H1 (cell line): ENCODE measurements at regions of chr7 and their contacts with region 1.

Region 1: DNA sequence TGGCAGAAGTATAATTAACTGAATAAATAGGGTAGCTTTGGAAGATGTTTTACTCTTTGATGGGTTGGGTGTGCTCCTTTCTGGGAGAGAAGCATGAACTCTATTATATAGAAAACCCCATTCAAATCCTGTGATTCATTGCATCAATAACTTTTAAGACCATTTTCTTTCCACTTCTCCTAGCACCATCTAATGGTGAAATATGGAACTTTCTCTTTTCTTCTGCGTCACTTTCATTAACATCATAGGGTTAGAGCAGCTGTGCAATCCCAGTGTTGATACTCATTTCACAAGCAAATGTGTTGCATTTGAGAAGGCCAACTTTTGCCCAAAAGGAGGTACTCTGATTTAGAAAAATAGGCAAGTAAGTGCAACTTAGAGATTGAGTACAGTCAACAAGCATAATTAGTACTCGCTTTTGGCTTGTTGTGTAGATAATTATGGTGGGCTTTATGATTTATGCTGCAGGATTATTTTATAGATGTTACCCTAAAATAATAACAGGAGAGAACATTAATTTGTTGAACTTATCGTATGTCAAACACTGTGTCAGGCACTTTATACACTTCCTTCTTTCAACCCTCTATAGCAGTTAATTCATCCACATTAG is 92.9 kb downstream of the CPED1 start:
- DNase-seq: no peak
- H3K4me3 ChIP-seq: no peak overlapping the region
- H3K27ac ChIP-seq: no peak overlapping the region
- H3K4me1 ChIP-seq: no peaks in the 10 kb centered on the region
- H3K27me3 ChIP-seq: no peaks in the 10 kb centered on the region; a peak in 1 of 7 replicates
- CTCF ChIP-seq: peak in 2 of 3 experiments; percentile 38 to 59; a peak in 2 of 4 replicates
- EP300 ChIP-seq: no peak
- POLR2A ChIP-seq: no peak
- RAD21 ChIP-seq: peak; percentile 68 to 69

Region 2: GRCh38 chr7:120792091-120792860 is 289.2 kb before region 1 on chr7:
- CTCF ChIA-PET with region 1: interaction called, 16 read pairs
- POLR2A ChIA-PET with region 1: no interaction called
- DNase-seq: peak; percentile 67 to 91
- H3K4me3 ChIP-seq: no peak overlapping the region
- H3K27ac ChIP-seq: no peak overlapping the region
- H3K4me1 ChIP-seq: peaks cover 0 to 4% (median 0%) of the 10 kb centered on the region in 4 experiments; a peak in 1 of 7 replicates
- H3K27me3 ChIP-seq: no peaks in the 10 kb centered on the region
- CTCF ChIP-seq: peak; percentile 92 to 97 (median 95)
- EP300 ChIP-seq: no peak
- POLR2A ChIP-seq: no peak
- RAD21 ChIP-seq: peak; percentile 71 to 84

Region 3: DNA sequence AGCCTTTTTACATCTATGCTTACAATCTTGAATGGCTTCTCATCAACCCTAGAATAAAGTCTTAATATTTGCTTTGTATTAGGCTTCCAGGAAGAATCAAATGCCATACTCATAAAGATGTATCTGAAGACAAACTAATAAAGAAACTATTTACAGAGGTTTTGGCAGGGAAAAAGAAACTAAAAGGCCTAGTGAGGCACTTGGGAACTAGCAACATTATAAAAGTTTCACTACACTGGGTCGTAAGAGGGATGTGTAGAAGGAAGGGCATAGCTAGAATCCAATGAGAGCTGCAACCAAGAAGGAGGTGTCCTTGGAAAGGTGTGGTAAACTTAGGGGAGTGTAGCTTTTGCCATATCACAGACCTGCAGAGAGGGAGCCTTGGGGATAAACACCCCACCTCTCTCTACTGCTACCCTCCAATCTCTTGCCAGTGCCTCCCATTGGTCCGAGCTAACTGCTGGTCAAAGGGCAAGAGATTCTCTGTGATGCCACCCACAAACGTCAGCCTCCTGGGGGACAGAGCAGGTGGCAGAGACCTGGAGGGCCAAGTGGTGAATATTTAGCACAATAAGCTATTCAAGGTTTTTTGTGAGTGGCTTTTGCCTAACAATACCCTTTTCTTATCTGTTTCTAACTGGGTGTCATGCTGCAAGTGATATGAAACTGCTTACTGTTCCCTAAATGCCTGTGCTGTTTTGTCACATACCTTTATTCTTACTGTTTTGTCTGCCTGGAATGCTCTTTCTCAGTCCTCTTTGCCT is 32.2 kb before region 1 on chr7:
- CTCF ChIA-PET with region 1: interaction called, 10 read pairs
- POLR2A ChIA-PET with region 1: no interaction called
- DNase-seq: peak in 1 of 2 experiments; percentile 25
- H3K4me3 ChIP-seq: 0 out of 8 replicates have a peak overlapping the region, but pooled peaks of 1 of the 4 experiments have one; percentile 2
- H3K27ac ChIP-seq: no peak overlapping the region
- H3K4me1 ChIP-seq: peaks cover 3 to 9% (median 4%) of the 10 kb centered on the region in 4 experiments; a peak in 2 of 7 replicates
- H3K27me3 ChIP-seq: no peaks in the 10 kb centered on the region
- CTCF ChIP-seq: no peak
- EP300 ChIP-seq: no peak
- POLR2A ChIP-seq: no peak
- RAD21 ChIP-seq: no peak

Region 4: GRCh38 chr7:121069346-121070100 is 11.9 kb before region 1 on chr7:
- CTCF ChIA-PET with region 1: interaction called, 23 read pairs
- POLR2A ChIA-PET with region 1: no interaction called
- DNase-seq: no peak
- H3K4me3 ChIP-seq: no peak overlapping the region
- H3K27ac ChIP-seq: no peak overlapping the region
- H3K4me1 ChIP-seq: no peaks in the 10 kb centered on the region
- H3K27me3 ChIP-seq: no peaks in the 10 kb centered on the region
- CTCF ChIP-seq: no peak
- EP300 ChIP-seq: no peak
- POLR2A ChIP-seq: no peak
- RAD21 ChIP-seq: no peak

Region 5: DNA sequence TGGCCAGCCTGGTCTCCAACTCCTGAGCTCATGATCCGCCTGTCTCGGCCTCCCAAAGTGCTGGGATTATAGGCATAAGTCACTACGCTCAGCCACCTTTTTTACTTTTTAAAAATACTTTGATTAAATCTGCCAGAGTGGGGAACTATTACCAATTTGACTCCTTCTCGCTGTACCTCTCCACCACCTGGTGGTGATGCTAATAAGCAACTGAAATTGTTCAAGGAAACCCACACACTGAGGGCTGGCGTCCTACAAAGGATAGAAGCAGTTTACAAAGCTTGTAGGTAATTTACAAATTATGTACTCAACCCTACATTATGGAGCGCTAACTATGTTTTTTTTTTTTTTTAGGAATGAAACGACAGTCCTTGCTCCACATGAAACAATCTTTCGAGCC is 18.1 kb after region 1 on chr7:
- CTCF ChIA-PET with region 1: interaction called, 39 read pairs
- POLR2A ChIA-PET with region 1: no interaction called
- DNase-seq: no peak
- H3K4me3 ChIP-seq: no peak overlapping the region
- H3K27ac ChIP-seq: no peak overlapping the region
- H3K4me1 ChIP-seq: peaks cover 3 to 18% (median 6%) of the 10 kb centered on the region in 4 experiments; a peak in 5 of 7 replicates
- H3K27me3 ChIP-seq: no peaks in the 10 kb centered on the region
- CTCF ChIP-seq: peak in 2 of 3 experiments; percentile 44 to 46; a peak in 2 of 4 replicates
- EP300 ChIP-seq: no peak
- POLR2A ChIP-seq: no peak
- RAD21 ChIP-seq: peak; percentile 59 to 69

Region 6: GRCh38 chr7:121107923-121108498 is 26.6 kb after region 1 on chr7:
- CTCF ChIA-PET with region 1: interaction called, 24 read pairs
- POLR2A ChIA-PET with region 1: no interaction called
- DNase-seq: no peak
- H3K4me3 ChIP-seq: no peak overlapping the region
- H3K27ac ChIP-seq: no peak overlapping the region
- H3K4me1 ChIP-seq: peaks cover 0 to 6% (median 2%) of the 10 kb centered on the region in 4 experiments; a peak in 1 of 7 replicates
- H3K27me3 ChIP-seq: no peaks in the 10 kb centered on the region
- CTCF ChIP-seq: peak in 2 of 3 experiments; percentile 48 to 69; a peak in 2 of 4 replicates
- EP300 ChIP-seq: no peak
- POLR2A ChIP-seq: no peak
- RAD21 ChIP-seq: peak; percentile 78